ENCODE measurements at regions of chr19 and their contacts with region 1.

Region 1: DNA sequence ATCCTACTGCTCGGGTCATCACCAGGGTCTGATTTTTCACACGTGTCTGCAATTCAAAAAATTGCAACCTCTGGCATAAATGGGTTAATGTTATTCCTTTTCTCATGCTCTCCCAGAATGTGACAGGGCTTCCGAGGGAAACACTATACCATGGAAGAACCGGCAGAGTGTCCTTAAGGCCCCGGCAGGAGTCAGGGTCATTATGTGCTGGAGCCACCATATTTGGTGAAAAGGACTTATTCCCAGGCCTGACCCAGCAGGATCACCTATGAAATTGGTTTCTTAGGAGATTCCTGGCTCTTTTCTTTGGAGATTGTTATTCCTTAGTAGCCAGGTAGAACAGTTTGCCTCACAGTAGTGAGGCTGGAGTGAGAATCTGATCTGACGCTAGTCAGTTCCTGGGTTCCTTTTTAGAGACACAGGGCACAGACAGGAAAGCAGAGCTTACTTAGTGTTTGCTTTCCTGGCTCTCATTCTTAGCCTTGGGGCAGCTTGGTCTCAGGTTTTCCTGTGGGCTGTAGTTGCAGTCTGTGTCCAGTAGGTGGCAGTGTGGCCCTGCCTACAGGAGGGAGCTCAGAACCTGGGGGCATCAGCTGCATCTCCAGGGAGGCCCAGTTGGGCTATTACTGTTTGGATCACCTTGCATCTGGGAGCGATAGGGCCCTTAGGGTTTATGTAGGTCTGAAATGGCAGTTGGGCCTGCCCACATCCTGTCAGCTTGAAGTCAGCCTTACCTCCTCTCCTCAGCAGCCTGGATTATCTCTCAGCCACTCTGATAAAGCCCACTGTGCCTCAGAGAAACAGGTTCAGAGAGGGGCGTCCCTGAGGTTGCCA is 12.4 kb downstream of the SNRNP70 start:
- DNase-seq: peak; percentile 71 to 88 (median 81)
- H3K4me3 ChIP-seq: no peak overlapping the region
- H3K27ac ChIP-seq: no peak overlapping the region
- H3K4me1 ChIP-seq: no peaks in the 10 kb centered on the region
- H3K27me3 ChIP-seq: no peaks in the 10 kb centered on the region

Region 2: GRCh38 chr19:49118565-49119410 is 21.1 kb after region 1 on chr19 and contains the start of gene C19orf73:
- CTCF ChIA-PET with region 1: interaction called, 11 read pairs
- POLR2A ChIA-PET with region 1: interaction called, 3 read pairs
- DNase-seq: peak; percentile 95 to 98 (median 97)
- H3K4me3 ChIP-seq: peak within 1 kb of the TSS; percentile 45 to 81 (median 64)
- H3K27ac ChIP-seq: peak within 1 kb of the TSS; percentile 25 to 89
- H3K4me1 ChIP-seq: peaks cover 2 to 46% (median 33%) of the 10 kb centered on the region in 4 experiments
- H3K27me3 ChIP-seq: peaks cover 0 to 22% (median 11%) of the 10 kb centered on the region in 5 experiments

Region 3: DNA sequence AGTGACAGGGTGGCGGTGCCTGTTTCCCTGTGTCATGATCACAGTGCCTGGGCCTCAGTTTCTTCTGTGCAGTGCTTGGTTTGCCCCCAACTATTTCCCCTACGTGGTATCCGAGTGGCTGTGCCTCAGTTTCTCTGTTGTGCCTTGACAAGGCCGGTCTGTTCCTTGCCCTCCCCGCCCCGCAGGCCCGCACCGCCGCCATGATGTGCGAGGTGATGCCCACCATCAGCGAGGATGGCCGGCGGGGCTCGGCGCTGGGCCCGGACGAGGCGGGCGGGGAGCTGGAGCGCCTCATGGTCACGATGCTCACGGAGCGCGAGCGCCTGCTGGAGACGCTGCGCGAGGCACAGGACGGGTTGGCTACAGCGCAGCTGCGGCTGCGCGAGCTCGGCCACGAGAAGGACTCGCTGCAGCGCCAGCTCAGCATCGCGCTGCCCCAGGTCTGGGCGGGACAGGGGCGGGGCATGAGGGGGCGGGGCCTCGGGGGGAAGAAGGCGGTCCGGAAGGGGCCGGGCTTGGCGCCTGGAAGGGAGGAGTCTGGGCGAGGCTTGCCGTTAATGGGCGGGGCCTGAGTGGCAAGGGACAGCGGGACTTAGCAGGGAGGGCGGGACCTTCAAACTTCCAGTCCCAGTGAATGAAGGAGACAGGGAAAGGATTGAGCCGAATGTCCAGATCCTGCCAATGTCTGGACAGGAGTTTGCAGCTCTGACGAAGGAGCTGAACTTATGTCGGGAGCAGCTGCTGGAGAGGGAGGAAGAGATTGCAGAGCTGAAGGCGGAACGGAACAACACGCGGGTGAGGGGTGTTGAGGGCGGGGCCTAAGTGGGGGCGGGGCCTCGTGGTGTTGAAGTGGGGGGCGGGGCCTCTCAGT is 30.2 kb after region 1 on chr19:
- CTCF ChIA-PET with region 1: interaction called, 13 read pairs
- POLR2A ChIA-PET with region 1: no interaction called
- DNase-seq: peak; percentile 93 to 97 (median 97)
- H3K4me3 ChIP-seq: peak overlapping the region in 6 of 7 experiments; percentile 48 to 82 (median 62)
- H3K27ac ChIP-seq: no peak overlapping the region
- H3K4me1 ChIP-seq: peaks cover 0 to 11% (median 6%) of the 10 kb centered on the region in 4 experiments
- H3K27me3 ChIP-seq: peaks cover 0 to 4% (median 0%) of the 10 kb centered on the region in 5 experiments

Region 4: DNA sequence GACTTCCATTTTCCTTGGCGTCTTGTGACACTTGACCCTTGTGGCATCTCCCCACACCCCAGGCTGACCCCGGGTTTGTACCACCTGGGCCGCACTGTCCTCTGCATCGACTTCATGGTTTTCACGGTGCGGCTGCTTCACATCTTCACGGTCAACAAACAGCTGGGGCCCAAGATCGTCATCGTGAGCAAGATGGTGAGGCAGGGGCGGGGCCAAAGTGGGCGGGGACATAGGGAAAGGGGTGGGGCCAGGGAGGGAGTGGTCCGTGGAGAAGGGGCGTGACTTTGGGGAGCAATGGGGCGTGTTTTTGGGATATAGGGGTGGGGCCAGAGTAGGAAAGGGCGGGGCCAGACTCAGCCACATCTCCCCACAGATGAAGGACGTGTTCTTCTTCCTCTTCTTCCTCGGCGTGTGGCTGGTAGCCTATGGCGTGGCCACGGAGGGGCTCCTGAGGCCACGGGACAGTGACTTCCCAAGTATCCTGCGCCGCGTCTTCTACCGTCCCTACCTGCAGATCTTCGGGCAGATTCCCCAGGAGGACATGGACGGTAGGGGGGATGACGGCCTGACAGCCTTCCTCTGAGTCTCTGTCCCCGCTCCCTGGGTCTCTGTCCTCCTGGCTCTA is 102.7 kb after region 1 on chr19:
- CTCF ChIA-PET with region 1: interaction called, 34 read pairs
- POLR2A ChIA-PET with region 1: no interaction called
- DNase-seq: peak; percentile 15 to 27 (median 18)
- H3K4me3 ChIP-seq: no peak overlapping the region
- H3K27ac ChIP-seq: no peak overlapping the region
- H3K4me1 ChIP-seq: no peaks in the 10 kb centered on the region
- H3K27me3 ChIP-seq: no peaks in the 10 kb centered on the region

Region 5: DNA sequence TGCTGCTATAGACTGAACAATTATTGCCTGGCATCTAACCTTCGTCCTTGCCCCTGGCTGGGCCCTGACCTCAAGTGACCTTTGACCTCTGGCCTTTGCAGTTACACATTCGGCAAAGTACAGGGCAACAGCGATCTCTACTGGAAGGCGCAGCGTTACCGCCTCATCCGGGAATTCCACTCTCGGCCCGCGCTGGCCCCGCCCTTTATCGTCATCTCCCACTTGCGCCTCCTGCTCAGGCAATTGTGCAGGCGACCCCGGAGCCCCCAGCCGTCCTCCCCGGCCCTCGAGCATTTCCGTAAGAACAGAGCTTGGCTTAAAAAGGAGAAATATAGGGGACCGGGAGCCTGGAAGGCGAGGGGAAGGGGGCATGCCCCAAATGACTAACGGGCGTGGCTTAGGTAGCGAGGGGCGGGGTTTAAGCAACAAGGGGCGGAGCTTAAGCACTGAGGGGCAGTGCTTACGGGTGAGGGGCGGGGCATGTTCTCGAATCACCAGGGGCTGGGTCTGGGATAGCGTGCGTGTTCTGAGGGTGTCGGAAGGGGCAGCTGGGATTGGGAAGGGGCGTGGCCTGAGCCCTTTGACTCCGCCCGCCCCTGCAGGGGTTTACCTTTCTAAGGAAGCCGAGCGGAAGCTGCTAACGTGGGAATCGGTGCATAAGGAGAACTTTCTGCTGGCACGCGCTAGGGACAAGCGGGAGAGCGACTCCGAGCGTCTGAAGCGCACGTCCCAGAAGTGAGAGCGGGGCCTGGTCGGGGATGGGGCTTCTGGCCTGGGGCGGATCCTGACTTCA is 112.6 kb after region 1 on chr19:
- CTCF ChIA-PET with region 1: interaction called, 14 read pairs
- POLR2A ChIA-PET with region 1: no interaction called
- DNase-seq: peak; percentile 43 to 69 (median 59)
- H3K4me3 ChIP-seq: no peak overlapping the region
- H3K27ac ChIP-seq: no peak overlapping the region
- H3K4me1 ChIP-seq: peaks cover 0 to 5% (median 1%) of the 10 kb centered on the region in 4 experiments
- H3K27me3 ChIP-seq: no peaks in the 10 kb centered on the region

Region 6: GRCh38 chr19:49224856-49225255 is 127.2 kb after region 1 on chr19:
- CTCF ChIA-PET with region 1: interaction called, 15 read pairs
- POLR2A ChIA-PET with region 1: no interaction called
- DNase-seq: peak; percentile 62 to 76 (median 71)
- H3K4me3 ChIP-seq: no peak overlapping the region
- H3K27ac ChIP-seq: no peak overlapping the region
- H3K4me1 ChIP-seq: no peaks in the 10 kb centered on the region
- H3K27me3 ChIP-seq: peaks cover 0 to 3% (median 0%) of the 10 kb centered on the region in 5 experiments

Measured in common myeloid progenitor, CD34-positive (primary cell).